ENCODE measurements at regions of chr7 and their contacts with region 1.

Region 1: DNA sequence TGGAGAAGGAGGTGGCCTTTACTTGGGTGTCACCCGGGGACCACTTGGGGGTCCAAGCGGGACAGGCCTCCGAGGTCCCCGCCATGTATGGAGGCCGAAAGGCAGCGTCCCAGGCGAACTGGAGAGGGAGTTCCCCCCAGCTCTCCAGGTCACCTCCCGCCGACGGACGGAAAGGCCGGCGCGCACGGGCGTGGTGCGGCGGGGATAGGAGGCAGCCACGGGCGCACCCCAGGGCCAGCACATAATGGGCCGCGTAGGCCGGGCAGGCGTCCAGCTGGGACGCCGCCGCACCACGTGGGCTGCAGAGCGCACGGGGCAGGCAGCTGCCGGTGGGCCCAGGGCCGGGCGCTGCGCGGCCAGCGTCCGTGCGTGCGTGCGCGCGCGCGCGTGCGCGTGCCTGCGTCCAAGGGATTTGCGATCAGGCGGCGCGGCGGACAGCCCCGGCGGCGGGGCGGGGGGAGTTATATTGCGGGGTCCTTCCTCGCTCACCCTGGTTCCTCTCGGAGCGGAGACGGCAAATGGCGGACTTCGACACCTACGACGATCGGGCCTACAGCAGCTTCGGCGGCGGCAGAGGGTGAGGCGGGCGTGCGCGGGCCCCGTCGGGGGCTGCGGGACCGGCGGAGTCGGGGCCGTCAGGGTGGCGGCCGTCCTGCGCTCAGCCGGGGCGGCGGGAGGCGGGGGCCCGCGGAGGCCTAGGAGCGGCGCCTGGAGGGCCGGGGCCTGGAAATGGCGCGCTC is at the start of gene EIF4H:
- DNase-seq: peak; percentile 97
- ATAC-seq: peak; percentile 75
- H3K4me3 Mint-ChIP-seq: peak within 1 kb of the TSS; percentile 94
- H3K27ac Mint-ChIP-seq: peak within 1 kb of the TSS; percentile 94
- H3K4me1 Mint-ChIP-seq: peaks cover 41% of the 10 kb centered on the region
- H3K27me3 Mint-ChIP-seq: no peaks in the 10 kb centered on the region
- total RNA-seq, gene EIF4H: 441 to 496 TPM

Region 2: GRCh38 chr7:73557108-73557396 is 617.0 kb before region 1 on chr7:
- CTCF ChIA-PET with region 1: no interaction called
- POLR2A ChIA-PET with region 1: interaction called, 3 read pairs
- intact Hi-C with region 1: loop called in 1 of 2 experiments (anchors 1 kb)
- DNase-seq: peak; percentile 95
- ATAC-seq: peak; percentile 92
- H3K4me3 Mint-ChIP-seq: peak overlapping the region; percentile 93
- H3K27ac Mint-ChIP-seq: peak overlapping the region; percentile 91
- H3K4me1 Mint-ChIP-seq: peaks cover 35% of the 10 kb centered on the region
- H3K27me3 Mint-ChIP-seq: no peaks in the 10 kb centered on the region

Region 3: GRCh38 chr7:74068393-74069085 is 105.5 kb before region 1 on chr7:
- CTCF ChIA-PET with region 1: interaction called, 5 read pairs
- POLR2A ChIA-PET with region 1: no interaction called
- intact Hi-C with region 1: loop called (anchors 1 to 5 kb)
- DNase-seq: no peak
- ATAC-seq: no peak
- H3K4me3 Mint-ChIP-seq: no peak overlapping the region
- H3K27ac Mint-ChIP-seq: no peak overlapping the region
- H3K4me1 Mint-ChIP-seq: no peaks in the 10 kb centered on the region
- H3K27me3 Mint-ChIP-seq: no peaks in the 10 kb centered on the region

Region 4: GRCh38 chr7:74094224-74095101 is 79.6 kb before region 1 on chr7:
- CTCF ChIA-PET with region 1: no interaction called
- POLR2A ChIA-PET with region 1: no interaction called
- intact Hi-C with region 1: loop called (anchors 1 to 5 kb)
- DNase-seq: peak; percentile 91
- ATAC-seq: peak; percentile 93
- H3K4me3 Mint-ChIP-seq: peak overlapping the region; percentile 52
- H3K27ac Mint-ChIP-seq: peak overlapping the region; percentile 59
- H3K4me1 Mint-ChIP-seq: peaks cover 18% of the 10 kb centered on the region
- H3K27me3 Mint-ChIP-seq: no peaks in the 10 kb centered on the region

Region 5: GRCh38 chr7:74254129-74254857 is 80.3 kb after region 1 on chr7 and contains the start of gene RFC2:
- CTCF ChIA-PET with region 1: no interaction called
- POLR2A ChIA-PET with region 1: no interaction called
- intact Hi-C with region 1: loop called (anchors 1 kb)
- DNase-seq: peak; percentile 98
- ATAC-seq: peak; percentile 96
- H3K4me3 Mint-ChIP-seq: peak within 1 kb of the TSS; percentile 98
- H3K27ac Mint-ChIP-seq: peak within 1 kb of the TSS; percentile 96
- H3K4me1 Mint-ChIP-seq: peaks cover 18% of the 10 kb centered on the region
- H3K27me3 Mint-ChIP-seq: no peaks in the 10 kb centered on the region
- total RNA-seq, gene RFC2: 84.9 to 123 TPM

Region 6: GRCh38 chr7:74656837-74657691 is 483.0 kb after region 1 on chr7:
- CTCF ChIA-PET with region 1: no interaction called
- POLR2A ChIA-PET with region 1: no interaction called
- intact Hi-C with region 1: loop called in 1 of 2 experiments (anchors 2 kb)
- DNase-seq: peak; percentile 100
- ATAC-seq: peak; percentile 82
- H3K4me3 Mint-ChIP-seq: peak overlapping the region; percentile 76
- H3K27ac Mint-ChIP-seq: peak overlapping the region; percentile 92
- H3K4me1 Mint-ChIP-seq: peaks cover 52% of the 10 kb centered on the region
- H3K27me3 Mint-ChIP-seq: no peaks in the 10 kb centered on the region

Measured in activated CD4-positive, alpha-beta T cell treated with anti-CD3 and anti-CD28 coated beads for 36 hours (primary cell).